HCT116 (cell line): ENCODE measurements at regions of chr15 and their contacts with region 1.

Region 1: GRCh38 chr15:76866716-76867321 is 38.3 kb downstream of the SCAPER start:
- DNase-seq: peak; percentile 16
- ATAC-seq: peak; percentile 60
- H3K4me3 ChIP-seq: no peak overlapping the region
- H3K27ac ChIP-seq: no peak overlapping the region
- H3K4me1 ChIP-seq: no peaks in the 10 kb centered on the region
- H3K27me3 ChIP-seq: no peaks in the 10 kb centered on the region
- CTCF ChIP-seq: peak; percentile 37 to 65 (median 50); a peak in 4 of 6 replicates
- POLR2A ChIP-seq: no peak
- RAD21 ChIP-seq: peak; percentile 71

Region 2: DNA sequence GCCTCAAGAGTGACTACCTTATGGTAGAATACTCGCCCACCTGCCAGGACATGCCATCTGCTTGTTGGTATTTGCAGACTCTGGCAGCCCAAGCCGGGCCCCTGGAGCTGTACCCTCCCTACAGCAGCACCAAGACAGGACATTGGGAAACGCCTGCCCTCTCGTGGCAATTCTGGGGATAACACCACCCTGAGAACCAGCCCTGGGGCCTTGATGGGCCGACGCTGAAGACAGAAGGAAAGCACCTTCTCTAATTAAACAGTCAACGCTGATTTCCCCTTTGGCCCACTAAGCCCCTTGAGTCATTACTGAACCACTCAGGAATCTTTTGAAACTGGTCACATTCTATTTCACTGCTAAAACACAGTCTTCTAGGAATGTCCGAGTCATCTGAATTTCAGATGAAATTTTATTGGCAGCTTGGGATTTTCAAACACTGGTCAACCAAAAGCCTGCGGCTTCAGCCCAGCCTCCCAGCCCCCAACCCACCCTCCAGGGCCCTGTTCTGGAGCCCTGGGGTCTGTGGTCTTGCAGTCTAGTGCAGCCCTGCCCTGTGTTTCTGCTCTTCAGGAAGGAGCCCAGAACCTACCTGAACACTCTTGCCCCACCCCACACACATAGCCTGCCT is 715.7 kb before region 1 on chr15:
- CTCF ChIA-PET with region 1: interaction called, 8 read pairs
- POLR2A ChIA-PET with region 1: no interaction called
- RAD21 ChIA-PET with region 1: no interaction called
- intact Hi-C with region 1: loop called (anchors 2 kb)
- DNase-seq: peak; percentile 42
- ATAC-seq: peak; percentile 92
- H3K4me3 ChIP-seq: no peak overlapping the region
- H3K27ac ChIP-seq: no peak overlapping the region
- H3K4me1 ChIP-seq: peaks cover 0 to 18% of the 10 kb centered on the region in 2 experiments; a peak in 2 of 4 replicates
- H3K27me3 ChIP-seq: no peaks in the 10 kb centered on the region
- CTCF ChIP-seq: peak; percentile 70 to 90 (median 84)
- POLR2A ChIP-seq: no peak
- RAD21 ChIP-seq: peak; percentile 74

Region 3: DNA sequence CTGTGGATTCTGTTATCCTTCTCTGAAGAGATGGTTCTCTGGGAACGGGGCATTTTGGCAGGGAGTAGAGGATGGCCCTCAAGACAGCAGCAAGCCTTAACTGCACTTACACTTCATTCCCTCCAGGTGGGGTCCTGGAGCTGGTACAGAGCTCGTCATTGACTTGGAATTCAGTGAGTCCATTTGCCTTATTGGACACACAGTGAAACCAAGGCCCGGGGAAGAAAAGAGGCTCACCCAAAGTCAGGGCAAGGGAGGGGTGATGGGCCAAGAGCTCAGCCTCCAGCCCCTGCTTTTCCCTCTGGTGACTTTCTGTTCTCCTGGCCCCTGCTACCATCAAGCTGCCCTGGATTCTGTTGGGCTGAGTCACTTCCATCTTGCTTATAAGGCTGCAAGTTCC is 681.1 kb before region 1 on chr15:
- CTCF ChIA-PET with region 1: interaction called, 12 read pairs
- POLR2A ChIA-PET with region 1: no interaction called
- RAD21 ChIA-PET with region 1: no interaction called
- intact Hi-C with region 1: loop called (anchors 1 kb)
- DNase-seq: peak; percentile 77
- ATAC-seq: peak; percentile 93
- H3K4me3 ChIP-seq: no peak overlapping the region
- H3K27ac ChIP-seq: no peak overlapping the region
- H3K4me1 ChIP-seq: peaks cover 0 to 15% of the 10 kb centered on the region in 2 experiments; a peak in 2 of 4 replicates
- H3K27me3 ChIP-seq: no peaks in the 10 kb centered on the region
- CTCF ChIP-seq: peak; percentile 52 to 85 (median 79); a peak in 5 of 6 replicates
- POLR2A ChIP-seq: no peak
- RAD21 ChIP-seq: peak; percentile 74

Region 4: GRCh38 chr15:76190834-76191538 is 675.8 kb before region 1 on chr15:
- CTCF ChIA-PET with region 1: interaction called, 12 read pairs
- POLR2A ChIA-PET with region 1: no interaction called
- RAD21 ChIA-PET with region 1: interaction called in 1 of 2 experiments, 3 read pairs
- intact Hi-C with region 1: loop called (anchors 1 kb)
- DNase-seq: peak; percentile 46
- ATAC-seq: peak; percentile 94
- H3K4me3 ChIP-seq: no peak overlapping the region
- H3K27ac ChIP-seq: no peak overlapping the region
- H3K4me1 ChIP-seq: peaks cover 3 to 17% of the 10 kb centered on the region in 2 experiments
- H3K27me3 ChIP-seq: no peaks in the 10 kb centered on the region
- CTCF ChIP-seq: peak in 2 of 3 experiments; percentile 91; a peak in 4 of 6 replicates
- POLR2A ChIP-seq: no peak
- RAD21 ChIP-seq: no peak

Region 5: GRCh38 chr15:76235186-76235826 is 631.5 kb before region 1 on chr15:
- CTCF ChIA-PET with region 1: no interaction called
- POLR2A ChIA-PET with region 1: no interaction called
- RAD21 ChIA-PET with region 1: no interaction called
- intact Hi-C with region 1: loop called (anchors 1 kb)
- DNase-seq: peak; percentile 19
- ATAC-seq: peak; percentile 96
- H3K4me3 ChIP-seq: no peak overlapping the region
- H3K27ac ChIP-seq: no peak overlapping the region
- H3K4me1 ChIP-seq: no peaks in the 10 kb centered on the region
- H3K27me3 ChIP-seq: no peaks in the 10 kb centered on the region
- CTCF ChIP-seq: peak; percentile 40 to 60 (median 57); a peak in 4 of 6 replicates
- POLR2A ChIP-seq: no peak
- RAD21 ChIP-seq: peak; percentile 65